Stomach (tissue), 19 donors: ENCODE measurements at regions of chr11 and their contacts with region 1.

Region 1: DNA sequence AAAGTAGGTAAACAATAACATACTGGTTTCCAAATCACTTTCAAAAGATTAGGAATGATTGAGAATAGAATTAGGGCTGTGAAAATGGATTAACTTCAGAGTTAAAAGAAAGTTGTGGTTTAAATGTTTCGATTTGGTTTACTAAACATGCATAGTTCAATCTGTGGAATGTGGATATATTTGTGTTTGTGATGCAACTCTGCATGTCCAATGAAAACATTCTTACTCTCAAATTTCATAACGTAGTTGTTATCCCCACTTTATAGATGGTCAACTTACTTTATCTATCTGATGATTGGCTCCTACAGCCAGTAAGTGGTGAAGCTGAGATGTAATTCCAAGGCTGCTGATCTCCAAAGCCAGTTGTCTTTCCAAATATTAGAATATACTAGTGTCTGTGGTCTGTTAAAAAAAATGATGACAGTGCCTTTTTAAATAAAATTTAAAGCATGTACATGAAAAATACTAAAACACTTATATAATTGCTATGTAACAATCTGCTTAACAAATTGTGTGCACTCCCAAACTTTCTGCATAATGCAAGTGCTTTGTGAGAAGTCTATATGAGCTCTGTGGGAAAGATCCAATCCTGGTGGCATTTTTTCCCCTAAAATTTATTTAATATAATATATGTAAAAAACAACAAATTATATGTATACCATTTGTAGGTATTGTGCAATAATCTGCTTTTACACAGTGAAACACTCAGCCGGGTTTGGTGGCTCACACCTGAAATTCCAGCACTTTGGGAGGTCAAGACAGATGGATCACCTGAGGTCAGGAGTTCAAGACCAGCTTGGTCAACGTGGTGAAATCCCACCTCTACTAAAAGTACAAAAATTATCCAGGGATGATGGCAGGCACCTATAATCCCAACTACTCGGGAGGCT is 9.7 kb upstream of the SIK3 start:
- DNase-seq: no peak
- H3K4me3 ChIP-seq: no peak overlapping the region
- H3K27ac ChIP-seq: no peak overlapping the region
- H3K4me1 ChIP-seq: peaks cover 0 to 9% (median 2%) of the 10 kb centered on the region in 4 donors
- H3K27me3 ChIP-seq: no peaks in the 10 kb centered on the region
- CTCF ChIP-seq: no peak
- EP300 ChIP-seq: no peak
- POLR2A ChIP-seq: no peak

Region 2: DNA sequence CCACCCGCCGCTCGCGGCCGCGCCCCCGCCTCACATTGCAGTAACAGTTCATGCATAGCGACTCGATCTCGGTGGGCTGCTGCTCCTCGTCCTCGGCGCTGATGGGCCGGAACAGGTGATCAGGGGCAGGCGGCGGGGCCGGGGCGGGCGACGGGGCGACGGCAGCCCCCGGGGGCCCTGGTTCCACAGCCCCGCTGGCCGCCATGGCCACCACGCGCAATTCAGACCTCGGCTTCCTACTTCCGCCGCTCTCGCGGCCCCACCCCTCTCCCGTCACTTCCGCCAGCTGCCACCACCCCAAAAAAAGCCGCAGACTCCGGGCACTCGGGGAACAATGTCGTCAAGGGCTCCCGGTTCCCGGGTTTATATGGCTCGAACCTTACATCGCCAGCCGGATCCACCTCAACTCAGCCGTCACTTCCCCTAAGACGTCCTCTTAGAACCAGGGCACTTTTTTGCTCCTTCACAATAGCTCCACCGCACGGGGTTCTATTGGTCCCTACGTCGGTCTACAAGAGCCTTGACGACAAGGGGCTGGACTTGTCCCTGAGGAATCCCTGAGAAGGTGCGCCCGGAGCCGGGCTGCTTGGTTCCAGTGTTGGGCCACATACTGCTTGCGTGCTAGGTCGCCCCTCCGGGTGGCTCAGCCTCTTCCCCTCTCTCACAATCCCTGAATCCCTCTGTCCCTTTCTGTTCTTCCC is 320.0 kb before region 1 on chr11 and contains the start of gene ZPR1:
- intact Hi-C with region 1: loop called (anchors 10 kb)
- DNase-seq: peak; percentile 89 to 95
- H3K4me3 ChIP-seq: peak within 1 kb of the TSS; percentile 78 to 99 (median 94)
- H3K27ac ChIP-seq: peak within 1 kb of the TSS; percentile 75 to 96 (median 91)
- H3K4me1 ChIP-seq: peaks cover 11 to 42% (median 37%) of the 10 kb centered on the region in 4 donors
- H3K27me3 ChIP-seq: no peaks in the 10 kb centered on the region
- CTCF ChIP-seq: peak in 1 of 7 experiments; percentile 6
- EP300 ChIP-seq: no peak
- POLR2A ChIP-seq: peak in 1 of 4 donors; percentile 66
- total RNA-seq, gene ZPR1: 19.3 to 54.9 (median 25.7) TPM

Region 3: GRCh38 chr11:116879800-116880625 is 227.9 kb before region 1 on chr11:
- intact Hi-C with region 1: loop called (anchors 5 kb)
- DNase-seq: peak in 1 of 2 donors; percentile 88
- H3K4me3 ChIP-seq: no peak overlapping the region
- H3K27ac ChIP-seq: peak overlapping the region in 1 of 5 donors; percentile 38
- H3K4me1 ChIP-seq: peaks cover 0 to 23% (median 4%) of the 10 kb centered on the region in 4 donors
- H3K27me3 ChIP-seq: no peaks in the 10 kb centered on the region
- CTCF ChIP-seq: peak in 5 of 7 experiments; percentile 33 to 74 (median 58)
- EP300 ChIP-seq: no peak
- POLR2A ChIP-seq: no peak